A549 (cell line): ENCODE measurements at regions of chr17 and their contacts with region 1.

Region 1: GRCh38 chr17:8118769-8119580 is 661 bp upstream of the ALOXE3 start:
- DNase-seq: peak; percentile 87 to 90
- ATAC-seq: peak; percentile 33 to 71
- H3K4me3 ChIP-seq: peak overlapping the region; percentile 51
- H3K27ac ChIP-seq: peak overlapping the region; percentile 67 to 90
- H3K4me1 ChIP-seq: peaks cover 13% of the 10 kb centered on the region
- CTCF ChIP-seq: peak; percentile 97
- EP300 ChIP-seq: no peak
- POLR2A ChIP-seq: no peak
- RAD21 ChIP-seq: peak; percentile 58 to 75

Region 2: DNA sequence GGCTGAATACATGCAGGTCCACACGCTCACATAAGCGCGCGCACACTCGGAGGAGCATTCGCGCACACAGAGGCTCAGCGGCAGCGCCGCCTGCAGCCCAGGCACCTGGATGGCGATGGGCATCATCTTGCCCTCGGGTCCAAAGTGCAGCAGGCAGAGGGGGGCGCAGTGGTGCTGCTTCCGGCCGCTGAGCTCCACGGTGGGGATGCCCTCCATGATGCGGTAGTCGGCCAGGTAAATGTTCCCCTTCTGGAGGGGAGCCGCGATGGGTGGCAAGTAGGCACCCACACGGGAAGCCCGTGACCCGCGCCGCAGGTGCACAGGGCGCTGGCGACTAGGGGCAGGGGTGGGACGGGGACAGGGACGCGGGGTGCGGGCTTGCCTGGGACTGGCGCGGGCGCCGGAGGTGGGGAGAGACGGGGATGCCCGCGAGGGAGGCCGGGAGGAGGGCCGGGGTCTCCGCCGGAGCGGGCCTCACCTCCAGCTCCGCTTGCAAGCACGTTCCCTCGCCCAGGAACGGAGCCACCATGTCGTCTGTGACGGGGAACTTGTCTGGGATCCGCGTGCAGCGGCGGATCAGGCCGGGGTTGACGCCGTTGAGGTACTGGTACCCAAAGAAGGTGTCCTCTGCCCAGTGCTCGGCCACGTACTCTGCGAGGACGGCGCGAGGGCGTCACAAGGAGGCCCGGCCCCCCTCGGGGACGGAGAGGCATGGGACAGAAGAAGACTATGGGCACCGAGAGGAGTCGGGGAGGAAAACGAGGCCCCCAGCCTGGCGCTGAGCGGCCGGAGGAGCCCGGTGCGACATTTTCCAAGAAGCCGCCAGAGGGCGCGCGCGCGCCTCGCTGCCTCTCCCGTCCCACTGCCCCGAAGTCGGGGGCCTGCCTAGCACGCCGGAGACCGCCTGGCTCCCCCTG is 39.4 kb before region 1 on chr17:
- CTCF ChIA-PET with region 1: interaction called, 1,490 read pairs
- POLR2A ChIA-PET with region 1: interaction called, 7 read pairs
- DNase-seq: peak; percentile 90 to 93
- ATAC-seq: peak; percentile 87 to 92
- H3K4me3 ChIP-seq: peak overlapping the region; percentile 58
- H3K27ac ChIP-seq: peak overlapping the region; percentile 70 to 89
- H3K4me1 ChIP-seq: peaks cover 10% of the 10 kb centered on the region
- CTCF ChIP-seq: peak; percentile 92
- EP300 ChIP-seq: no peak
- POLR2A ChIP-seq: peak; percentile 54
- RAD21 ChIP-seq: peak; percentile 69 to 72

Region 3: GRCh38 chr17:8138672-8139371 is 19.8 kb after region 1 on chr17:
- CTCF ChIA-PET with region 1: interaction called, 92 read pairs
- POLR2A ChIA-PET with region 1: interaction called, 5 read pairs
- DNase-seq: peak; percentile 93 to 99
- ATAC-seq: peak; percentile 86 to 94
- H3K4me3 ChIP-seq: peak overlapping the region; percentile 58
- H3K27ac ChIP-seq: peak overlapping the region; percentile 82 to 86
- H3K4me1 ChIP-seq: peaks cover 22% of the 10 kb centered on the region
- CTCF ChIP-seq: peak; percentile 98
- EP300 ChIP-seq: peak in 1 of 2 experiments; percentile 27; a peak in 1 of 5 replicates
- POLR2A ChIP-seq: peak; percentile 47; the same call in 1 of the 2 replicates
- RAD21 ChIP-seq: peak; percentile 90 to 93

Region 4: DNA sequence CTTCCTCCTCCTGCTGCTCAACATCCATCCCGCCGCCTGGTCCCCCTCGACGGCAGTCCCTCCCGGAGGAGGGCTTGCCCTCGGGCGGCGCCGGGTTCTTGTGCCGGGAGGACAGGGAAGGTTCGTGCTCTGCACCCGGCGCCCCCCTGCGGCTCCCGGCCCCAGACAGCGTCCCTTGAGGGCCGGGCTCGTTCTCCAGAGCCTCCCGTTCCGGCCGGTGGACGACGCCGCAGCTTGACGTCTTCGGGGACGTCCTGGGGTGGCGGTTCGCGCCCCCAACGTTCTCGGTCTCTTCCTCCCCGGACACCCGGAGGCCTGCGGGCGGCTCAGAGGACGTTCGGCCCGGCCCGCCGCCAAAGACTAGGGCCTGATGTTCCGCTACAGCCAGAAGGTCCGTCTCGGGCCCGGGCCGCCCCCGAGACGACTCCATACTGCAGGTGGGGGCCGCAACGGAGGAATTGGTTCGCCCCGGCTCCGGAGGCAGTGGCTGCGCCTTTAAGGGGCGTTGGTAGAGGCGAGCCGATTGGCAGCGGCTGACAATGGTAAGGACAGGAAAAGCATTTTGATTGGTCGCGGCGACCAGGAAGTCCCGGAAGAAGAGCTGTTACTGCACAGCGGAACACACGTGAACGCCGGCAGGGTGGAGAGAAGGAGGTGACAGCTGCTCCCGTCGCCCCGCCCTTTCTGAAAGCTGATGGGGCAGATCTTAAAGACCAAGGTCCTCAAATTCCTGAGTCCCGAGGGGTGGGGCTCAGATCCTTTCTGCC is 70.9 kb after region 1 on chr17 and contains the start of gene BORCS6:
- CTCF ChIA-PET with region 1: interaction called, 25 read pairs
- POLR2A ChIA-PET with region 1: interaction called, 9 read pairs
- DNase-seq: peak; percentile 97 to 99
- ATAC-seq: peak; percentile 41 to 68
- H3K4me3 ChIP-seq: peak within 1 kb of the TSS; percentile 71
- H3K27ac ChIP-seq: peak within 1 kb of the TSS; percentile 88 to 89
- H3K4me1 ChIP-seq: peaks cover 40% of the 10 kb centered on the region
- CTCF ChIP-seq: peak; percentile 19; the same call in 1 of the 3 replicates
- EP300 ChIP-seq: no peak
- POLR2A ChIP-seq: peak; percentile 65
- RAD21 ChIP-seq: no peak
- polyA plus RNA-seq, gene BORCS6: 3.0 and 3.3 TPM in 2 replicates

Region 5: GRCh38 chr17:8248751-8249607 is 130.0 kb after region 1 on chr17 and contains the start of gene PFAS:
- CTCF ChIA-PET with region 1: interaction called, 4 read pairs
- POLR2A ChIA-PET with region 1: interaction called, 13 read pairs
- DNase-seq: peak; percentile 97
- ATAC-seq: peak; percentile 62 to 69
- H3K4me3 ChIP-seq: peak within 1 kb of the TSS; percentile 74
- H3K27ac ChIP-seq: peak within 1 kb of the TSS; percentile 97 to 99
- H3K4me1 ChIP-seq: peaks cover 8% of the 10 kb centered on the region
- CTCF ChIP-seq: no peak
- EP300 ChIP-seq: no peak
- POLR2A ChIP-seq: peak; percentile 91
- RAD21 ChIP-seq: no peak
- polyA plus RNA-seq, gene PFAS: 51.9 and 64.5 TPM in 2 replicates